CD4-positive, alpha-beta memory T cell (primary cell): ENCODE measurements at regions of chr2 and their contacts with region 1.

Region 1: DNA sequence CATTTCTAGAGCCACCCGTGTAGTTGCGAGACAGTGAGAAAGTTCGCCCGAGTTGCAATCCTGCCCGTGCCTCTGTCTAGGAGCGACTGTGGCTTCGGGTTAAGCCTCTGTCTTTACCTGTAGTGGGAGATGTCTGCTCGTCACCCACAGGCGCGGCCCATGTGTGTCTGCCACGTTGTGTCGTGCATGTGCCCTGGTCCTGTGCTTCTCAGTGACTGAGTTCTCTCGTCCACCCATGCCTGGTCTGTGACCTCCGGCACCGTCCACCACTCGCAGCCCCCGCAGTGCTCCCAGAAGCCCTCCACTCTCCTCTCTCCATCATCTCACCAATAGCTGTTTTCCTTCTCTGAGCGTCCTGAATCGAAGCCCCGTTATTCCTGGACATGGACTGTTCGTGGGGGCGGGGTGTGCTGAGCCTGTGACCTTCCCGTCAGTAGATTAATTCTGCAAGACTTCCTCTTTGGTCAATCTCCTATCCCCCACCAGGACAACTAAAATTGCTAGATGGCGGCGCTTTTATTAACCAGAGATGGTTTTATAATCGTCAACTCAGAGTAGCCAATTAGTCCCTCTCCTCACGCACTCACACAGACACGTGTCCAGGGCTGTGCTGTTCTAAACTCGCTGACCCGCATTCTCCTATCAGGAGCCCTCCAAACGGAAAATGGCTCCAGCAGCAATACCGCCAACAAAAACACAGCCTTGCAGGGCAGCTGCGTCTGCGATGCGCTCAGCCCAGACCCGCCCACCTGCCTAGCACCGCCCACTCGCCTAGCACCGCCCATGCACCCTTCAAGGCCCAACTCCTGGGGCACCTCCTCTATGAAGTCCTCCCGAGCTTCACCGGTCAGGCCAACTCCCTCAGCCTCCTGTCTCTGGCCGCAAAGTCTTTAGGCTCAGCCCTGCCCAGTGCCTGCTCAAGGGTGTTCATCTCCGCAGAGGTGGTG is 119.4 kb downstream of the TWIST2 start:
- DNase-seq: no peak
- H3K4me3 ChIP-seq: no peak overlapping the region
- H3K4me3 Mint-ChIP-seq: no peak overlapping the region
- H3K27ac ChIP-seq: no peak overlapping the region
- H3K27ac Mint-ChIP-seq: peak overlapping the region in 1 of 7 donors; percentile 62
- H3K4me1 ChIP-seq: no peaks in the 10 kb centered on the region
- H3K4me1 Mint-ChIP-seq: no peaks in the 10 kb centered on the region
- H3K27me3 ChIP-seq: peaks cover 3% of the 10 kb centered on the region
- H3K27me3 Mint-ChIP-seq: peaks cover 9 to 19% of the 10 kb centered on the region in 2 donors

Region 2: DNA sequence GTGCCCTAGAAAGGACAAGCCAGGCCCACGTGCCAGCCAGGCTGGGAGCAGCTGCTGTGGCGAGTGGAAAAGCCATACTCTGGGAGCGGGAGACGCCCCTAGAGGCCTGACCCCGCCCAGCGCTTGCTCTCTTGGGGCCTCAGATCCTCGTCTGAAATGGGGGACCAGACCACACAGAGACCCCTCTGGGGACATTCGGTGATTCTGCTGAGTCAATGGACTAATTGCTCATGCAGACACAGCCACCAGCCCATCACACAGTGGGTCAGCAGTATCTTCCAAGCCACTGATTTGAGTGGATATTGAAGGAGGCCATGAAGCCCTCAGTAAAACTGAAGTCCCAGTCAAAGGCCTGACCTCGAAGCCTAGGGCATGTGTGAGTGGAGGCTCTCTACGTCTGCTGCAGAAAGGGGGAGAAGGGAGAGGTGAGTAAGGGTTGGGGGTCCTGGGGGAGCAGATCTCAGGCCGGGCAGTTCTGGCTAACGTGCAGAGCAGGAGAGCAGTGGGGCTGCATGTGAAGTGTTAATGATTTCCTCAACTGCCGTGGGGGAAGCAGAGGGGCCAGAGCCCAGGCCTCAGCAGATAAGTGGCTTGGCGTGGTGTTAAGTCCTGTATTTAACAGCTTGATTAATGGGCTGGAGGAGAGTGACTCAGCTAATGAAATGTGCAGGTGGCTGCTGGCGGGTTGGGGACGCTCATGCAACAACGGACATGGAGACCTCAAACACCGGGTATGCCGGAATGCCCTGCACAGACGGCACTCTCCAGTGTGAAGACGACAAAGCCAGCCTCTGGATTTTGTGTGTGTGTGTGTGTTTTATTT is 223.8 kb before region 1 on chr2:
- CTCF ChIA-PET with region 1: no interaction called
- POLR2A ChIA-PET with region 1: no interaction called
- intact Hi-C with region 1: no loop called
- DNase-seq: no peak
- H3K4me3 ChIP-seq: no peak overlapping the region
- H3K4me3 Mint-ChIP-seq: no peak overlapping the region
- H3K27ac ChIP-seq: no peak overlapping the region
- H3K27ac Mint-ChIP-seq: no peak overlapping the region
- H3K4me1 ChIP-seq: no peaks in the 10 kb centered on the region
- H3K4me1 Mint-ChIP-seq: peaks cover 0 to 2% (median 0%) of the 10 kb centered on the region in 4 donors
- H3K27me3 ChIP-seq: no peaks in the 10 kb centered on the region
- H3K27me3 Mint-ChIP-seq: peaks cover 21 to 35% of the 10 kb centered on the region in 2 donors

Region 3: GRCh38 chr2:238979636-238980035 is 12.3 kb after region 1 on chr2:
- CTCF ChIA-PET with region 1: interaction called, 11 read pairs
- POLR2A ChIA-PET with region 1: no interaction called
- intact Hi-C with region 1: no loop called
- DNase-seq: no peak
- H3K4me3 ChIP-seq: no peak overlapping the region
- H3K4me3 Mint-ChIP-seq: no peak overlapping the region
- H3K27ac ChIP-seq: no peak overlapping the region
- H3K27ac Mint-ChIP-seq: no peak overlapping the region
- H3K4me1 ChIP-seq: no peaks in the 10 kb centered on the region
- H3K4me1 Mint-ChIP-seq: no peaks in the 10 kb centered on the region
- H3K27me3 ChIP-seq: no peaks in the 10 kb centered on the region
- H3K27me3 Mint-ChIP-seq: peaks cover 4 to 10% of the 10 kb centered on the region in 2 donors

Region 4: GRCh38 chr2:239075918-239076758 is 108.8 kb after region 1 on chr2:
- CTCF ChIA-PET with region 1: no interaction called
- POLR2A ChIA-PET with region 1: no interaction called
- intact Hi-C with region 1: no loop called
- DNase-seq: no peak
- H3K4me3 ChIP-seq: no peak overlapping the region
- H3K4me3 Mint-ChIP-seq: no peak overlapping the region
- H3K27ac ChIP-seq: no peak overlapping the region
- H3K27ac Mint-ChIP-seq: peak overlapping the region in 1 of 7 donors; percentile 6
- H3K4me1 ChIP-seq: no peaks in the 10 kb centered on the region
- H3K4me1 Mint-ChIP-seq: peaks cover 0 to 2% (median 0%) of the 10 kb centered on the region in 4 donors
- H3K27me3 ChIP-seq: no peaks in the 10 kb centered on the region
- H3K27me3 Mint-ChIP-seq: no peaks in the 10 kb centered on the region